Common myeloid progenitor, CD34-positive (primary cell): ENCODE measurements at regions of chr7 and their contacts with region 1.

Region 1: GRCh38 chr7:74206589-74207120 is 3.2 kb upstream of the LAT2 start:
- DNase-seq: peak in 2 of 3 donors; percentile 67 to 75
- H3K4me3 ChIP-seq: peak overlapping the region in 4 of 7 experiments; percentile 25 to 72 (median 44)
- H3K27ac ChIP-seq: no peak overlapping the region
- H3K4me1 ChIP-seq: peaks cover 3 to 60% (median 47%) of the 10 kb centered on the region in 4 experiments
- H3K27me3 ChIP-seq: no peaks in the 10 kb centered on the region

Region 2: DNA sequence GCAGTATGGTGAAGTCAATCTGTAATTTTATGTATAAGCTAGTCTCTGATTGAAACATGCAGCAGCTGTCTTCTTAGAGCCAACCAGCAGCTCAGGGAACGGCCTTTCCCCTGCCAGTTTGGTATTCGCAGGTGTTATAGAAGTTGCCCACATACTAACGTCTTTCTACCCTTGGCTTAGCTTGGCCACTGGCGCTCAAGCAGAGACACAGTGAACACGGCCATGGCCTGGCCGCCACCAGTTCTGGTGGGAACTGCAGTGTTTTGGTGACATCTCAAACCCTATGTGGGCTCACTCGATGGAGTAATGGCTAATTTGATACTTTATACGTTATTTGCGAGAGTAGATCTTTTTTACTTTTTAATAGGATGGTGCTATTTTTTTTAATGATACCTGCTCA is 15.4 kb before region 1 on chr7:
- CTCF ChIA-PET with region 1: interaction called, 25 read pairs
- POLR2A ChIA-PET with region 1: no interaction called
- DNase-seq: no peak
- H3K4me3 ChIP-seq: no peak overlapping the region
- H3K27ac ChIP-seq: no peak overlapping the region
- H3K4me1 ChIP-seq: peaks cover 2 to 24% (median 16%) of the 10 kb centered on the region in 4 experiments
- H3K27me3 ChIP-seq: no peaks in the 10 kb centered on the region

Region 3: DNA sequence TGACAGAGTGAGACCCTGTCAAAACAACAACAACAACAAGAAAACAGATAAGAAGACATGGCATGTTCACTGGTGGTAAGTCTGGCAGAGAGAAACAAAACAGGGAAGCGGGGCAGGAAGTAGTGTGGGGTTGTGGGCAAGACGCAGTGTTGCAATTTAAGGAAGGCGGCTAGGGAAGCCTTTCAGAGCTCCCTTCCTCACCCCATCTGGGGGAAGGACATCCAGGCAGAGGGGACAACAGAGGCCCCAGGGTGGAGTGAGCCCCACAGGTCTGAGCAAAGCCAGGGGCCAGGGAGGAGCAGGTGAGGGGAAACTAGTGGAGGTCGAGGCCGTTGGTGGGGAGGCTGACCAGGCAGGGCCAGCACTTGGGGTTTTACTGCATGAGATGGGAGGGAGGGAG is 20.0 kb after region 1 on chr7:
- CTCF ChIA-PET with region 1: interaction called, 31 read pairs
- POLR2A ChIA-PET with region 1: interaction called, 4 read pairs
- DNase-seq: peak; percentile 45 to 65 (median 59)
- H3K4me3 ChIP-seq: no peak overlapping the region
- H3K27ac ChIP-seq: peak overlapping the region in 1 of 2 experiments; percentile 61
- H3K4me1 ChIP-seq: peaks cover 0 to 35% (median 16%) of the 10 kb centered on the region in 4 experiments
- H3K27me3 ChIP-seq: no peaks in the 10 kb centered on the region

Region 4: DNA sequence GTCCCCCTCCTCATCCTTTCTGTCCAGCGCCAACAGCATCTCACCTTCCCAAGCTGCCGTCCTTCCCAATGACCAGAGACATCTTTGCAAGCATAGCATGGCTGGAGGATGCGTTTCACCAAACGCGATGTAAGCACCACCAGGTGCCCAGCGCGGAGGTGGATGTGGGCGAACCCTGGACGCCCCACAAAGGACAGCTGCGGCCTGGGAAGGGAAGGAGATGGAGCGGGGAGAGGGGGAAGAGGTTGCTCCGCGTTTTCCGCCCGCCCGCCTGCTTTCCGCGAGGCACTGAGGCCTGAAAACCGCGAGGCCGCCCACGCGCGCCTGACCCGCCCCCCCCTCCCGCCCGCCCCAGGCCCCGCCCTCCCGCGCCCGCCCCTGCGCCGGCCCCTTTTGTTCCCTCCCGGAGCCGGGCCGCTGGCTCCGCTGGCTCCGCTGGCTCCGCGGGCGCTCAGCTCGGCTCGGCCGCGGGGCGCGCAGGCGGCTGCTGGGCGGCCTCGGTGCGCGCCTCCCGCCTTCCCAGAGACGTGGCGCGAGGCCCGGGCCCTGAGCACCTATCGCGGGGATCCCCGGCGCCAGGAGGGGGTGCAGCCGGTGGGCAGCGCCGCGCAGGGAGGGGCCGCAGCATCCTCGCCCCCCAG is 82.5 kb after region 1 on chr7 and contains the start of gene CLIP2:
- CTCF ChIA-PET with region 1: interaction called, 20 read pairs
- POLR2A ChIA-PET with region 1: interaction called, 3 read pairs
- DNase-seq: peak; percentile 72 to 86 (median 85)
- H3K4me3 ChIP-seq: peak within 1 kb of the TSS; percentile 60 to 93 (median 81)
- H3K27ac ChIP-seq: peak within 1 kb of the TSS in 1 of 2 experiments; percentile 43
- H3K4me1 ChIP-seq: peaks cover 5 to 77% (median 49%) of the 10 kb centered on the region in 4 experiments
- H3K27me3 ChIP-seq: no peaks in the 10 kb centered on the region

Region 5: GRCh38 chr7:74324531-74325209 is 118.0 kb after region 1 on chr7:
- CTCF ChIA-PET with region 1: no interaction called
- POLR2A ChIA-PET with region 1: no interaction called
- DNase-seq: no peak
- H3K4me3 ChIP-seq: no peak overlapping the region
- H3K27ac ChIP-seq: no peak overlapping the region
- H3K4me1 ChIP-seq: peaks cover 0 to 8% (median 0%) of the 10 kb centered on the region in 4 experiments
- H3K27me3 ChIP-seq: no peaks in the 10 kb centered on the region

Region 6: GRCh38 chr7:74525880-74526279 is 319.2 kb after region 1 on chr7:
- CTCF ChIA-PET with region 1: no interaction called
- POLR2A ChIA-PET with region 1: no interaction called
- DNase-seq: no peak
- H3K4me3 ChIP-seq: no peak overlapping the region
- H3K27ac ChIP-seq: no peak overlapping the region
- H3K4me1 ChIP-seq: no peaks in the 10 kb centered on the region
- H3K27me3 ChIP-seq: no peaks in the 10 kb centered on the region